Head of caudate nucleus (tissue), 42 donors: ENCODE measurements at regions of chr13 and their contacts with region 1.

Region 1: DNA sequence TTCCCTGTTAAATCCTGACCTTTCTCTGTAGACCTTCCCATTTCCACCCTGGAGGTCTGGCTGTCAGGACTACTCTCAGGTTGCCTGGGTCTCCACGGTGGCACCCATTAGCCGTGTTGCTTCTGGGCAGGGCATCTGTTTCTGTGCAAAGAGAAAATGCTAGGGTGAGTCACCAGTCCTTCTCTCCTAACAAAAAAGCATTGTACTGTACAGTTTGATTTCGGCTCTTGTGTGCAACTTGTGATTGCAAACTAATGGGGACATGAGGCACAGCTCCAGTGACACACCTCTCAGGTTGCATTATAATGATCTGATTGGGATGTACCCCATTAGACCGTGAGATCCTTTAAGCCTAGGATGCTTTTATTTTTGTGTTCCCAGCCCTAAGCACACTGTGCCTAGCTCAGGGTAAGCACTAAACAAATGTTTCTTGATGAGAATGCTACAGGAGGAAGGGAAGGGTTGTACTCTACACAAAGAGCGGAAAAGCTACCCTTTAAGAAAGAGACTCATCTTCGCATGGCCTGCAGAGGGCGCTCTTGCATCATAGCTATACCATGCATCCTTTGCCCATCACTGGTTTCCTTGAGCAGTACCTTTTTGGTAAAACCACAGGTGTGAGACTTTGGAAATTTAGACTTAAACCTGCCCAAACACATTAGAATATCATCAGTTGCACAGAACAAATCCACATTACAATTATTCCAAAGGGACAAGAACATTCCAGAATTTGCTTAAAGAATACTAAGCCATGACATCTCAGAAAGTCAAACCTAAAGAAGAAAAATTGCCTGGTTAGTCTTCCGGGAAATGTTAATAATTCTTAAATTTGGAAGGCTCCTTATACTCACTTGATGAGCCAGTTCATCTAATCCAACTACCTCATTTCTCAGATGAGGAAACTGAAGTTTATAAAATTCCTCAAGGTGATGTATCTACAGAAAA is 20.3 kb upstream of the TRIM13 start:
- DNase-seq: peak; percentile 31 to 92 (median 78)

Region 2: GRCh38 chr13:48892053-48892690 is 1084.4 kb before region 1 on chr13:
- intact Hi-C with region 1: no loop called
- DNase-seq: no peak

Region 3: DNA sequence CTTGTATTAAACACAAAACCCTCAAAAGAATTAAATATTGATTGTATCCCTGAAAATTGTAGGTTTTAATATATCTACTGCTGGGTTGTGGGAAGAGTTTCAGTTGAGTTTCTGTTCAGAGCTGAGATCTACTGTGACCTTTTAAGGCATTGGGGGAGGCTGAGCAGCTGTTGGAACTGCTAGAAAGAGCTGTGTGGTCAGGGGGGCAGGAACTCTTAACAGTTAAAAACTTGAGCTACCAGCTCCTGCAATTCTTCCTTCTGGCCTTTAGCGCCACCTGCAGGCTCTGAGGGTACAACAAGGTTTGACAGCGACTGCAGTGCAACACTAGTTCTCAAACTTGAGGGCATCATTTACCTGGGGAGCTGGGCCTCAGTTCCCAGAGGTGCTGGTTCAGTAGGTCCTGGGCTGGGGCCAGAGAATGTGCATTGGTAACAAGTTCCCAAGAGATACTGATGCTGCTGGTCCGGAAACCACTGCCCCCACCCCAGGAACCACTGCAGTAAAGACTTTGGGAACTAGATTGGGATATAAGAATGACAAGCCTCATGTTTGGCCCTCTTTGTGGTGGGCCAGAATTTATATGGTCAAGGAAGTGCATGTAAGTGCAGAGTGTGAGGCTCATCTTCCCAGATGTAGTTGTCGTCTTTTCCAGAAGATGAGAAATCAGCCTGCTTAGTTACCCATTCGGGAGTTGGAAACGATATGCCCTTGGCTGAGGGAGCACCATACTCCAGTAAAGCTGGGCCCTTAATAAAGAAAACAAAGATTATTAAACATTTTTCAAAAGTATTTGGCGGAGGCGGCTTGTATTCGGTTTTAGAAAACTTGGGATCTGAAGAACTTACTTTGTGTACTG is 935.6 kb after region 1 on chr13:
- intact Hi-C with region 1: loop called (anchors 10 kb)
- DNase-seq: peak; percentile 72 to 96 (median 91)